ENCODE measurements at regions of chr4 and their contacts with region 1.

Region 1: DNA sequence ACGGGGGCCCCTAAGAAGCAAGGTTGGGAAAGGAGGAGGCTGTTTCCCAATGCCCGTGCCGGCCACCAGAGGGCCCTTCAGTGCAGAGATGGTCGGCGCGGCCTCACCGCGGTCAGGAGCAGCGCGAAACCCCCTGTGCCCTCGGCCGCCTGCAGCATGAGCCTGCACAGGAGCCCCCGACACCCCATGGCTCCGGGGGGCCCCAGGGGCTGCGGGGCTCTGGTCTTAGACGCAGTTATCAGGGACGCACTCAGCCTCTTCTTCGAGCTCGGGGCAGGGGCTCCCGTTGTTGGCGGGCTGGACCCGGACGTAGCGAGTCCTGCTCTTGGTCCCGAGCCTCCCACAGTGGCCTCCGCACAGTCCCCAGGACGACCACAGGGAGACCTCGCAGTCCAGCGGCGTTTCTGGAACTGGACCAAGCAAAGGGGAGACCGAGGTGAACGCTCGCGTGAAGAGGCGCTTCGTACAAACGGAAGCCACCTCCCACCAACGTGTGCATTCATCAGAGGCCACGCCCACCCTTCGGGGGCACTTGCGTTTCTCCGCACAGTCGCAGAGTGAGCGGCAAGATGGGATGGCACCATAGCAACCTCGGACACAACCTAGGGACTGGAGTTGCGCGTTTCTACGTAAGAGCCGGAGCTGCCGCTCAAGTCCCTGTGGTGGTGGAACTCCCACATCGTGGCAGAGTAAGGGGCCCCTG is 5.0 kb downstream of the SPON2 start:
- DNase-seq: peak; percentile 94
- H3K4me3 Mint-ChIP-seq: peak overlapping the region; percentile 76
- H3K27ac Mint-ChIP-seq: peak overlapping the region; percentile 73
- H3K4me1 Mint-ChIP-seq: peaks cover 35% of the 10 kb centered on the region
- H3K27me3 Mint-ChIP-seq: peaks cover 76% of the 10 kb centered on the region

Region 2: DNA sequence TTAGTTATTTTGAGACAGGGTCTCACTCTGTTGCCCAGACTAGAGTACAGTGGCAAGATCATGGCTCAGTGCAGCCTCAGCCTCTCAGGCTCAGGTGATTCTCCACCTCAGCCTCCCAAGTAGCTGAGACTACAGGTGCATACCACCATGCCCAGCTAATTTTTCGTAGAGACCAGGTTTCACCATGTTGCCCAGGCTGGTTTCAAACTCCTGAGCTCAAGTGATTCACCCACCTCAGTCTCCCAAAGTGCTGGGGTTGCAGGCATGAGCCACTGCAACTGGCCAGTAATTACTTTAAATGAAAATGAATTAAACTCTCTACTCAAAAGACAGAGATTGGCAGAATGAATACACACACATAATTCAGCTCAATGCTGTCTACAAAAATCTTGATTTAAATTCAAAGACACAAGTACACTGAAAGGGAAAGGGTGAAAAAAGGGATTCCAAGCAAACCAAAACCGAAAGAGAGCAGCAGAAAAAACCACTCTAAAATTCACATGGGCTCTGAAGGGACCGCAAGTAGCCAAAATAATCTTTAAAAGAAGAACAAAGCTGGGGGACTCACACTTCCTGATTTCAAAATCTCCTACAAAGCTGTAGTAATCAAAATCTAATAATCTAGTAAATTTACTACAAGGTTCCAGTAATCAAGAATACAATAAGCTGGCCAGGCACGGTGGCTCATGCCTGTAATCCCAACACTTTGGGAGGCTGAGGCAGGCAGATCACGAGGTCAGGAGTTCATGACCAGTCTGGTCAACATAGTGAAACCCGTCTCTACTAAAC is 16.8 kb after region 1 on chr4:
- CTCF ChIA-PET with region 1: interaction called, 12 read pairs
- DNase-seq: no peak
- H3K4me3 Mint-ChIP-seq: no peak overlapping the region
- H3K27ac Mint-ChIP-seq: peak overlapping the region; percentile 31
- H3K4me1 Mint-ChIP-seq: peaks cover 45% of the 10 kb centered on the region
- H3K27me3 Mint-ChIP-seq: peaks cover 22% of the 10 kb centered on the region

Region 3: GRCh38 chr4:1201851-1202525 is 34.6 kb after region 1 on chr4:
- CTCF ChIA-PET with region 1: interaction called, 15 read pairs
- DNase-seq: peak; percentile 89
- H3K4me3 Mint-ChIP-seq: peak overlapping the region; percentile 84
- H3K27ac Mint-ChIP-seq: peak overlapping the region; percentile 100
- H3K4me1 Mint-ChIP-seq: peaks cover 54% of the 10 kb centered on the region
- H3K27me3 Mint-ChIP-seq: peaks cover 1% of the 10 kb centered on the region

Region 4: GRCh38 chr4:1216869-1217294 is 49.5 kb after region 1 on chr4:
- CTCF ChIA-PET with region 1: interaction called, 16 read pairs
- DNase-seq: peak; percentile 85
- H3K4me3 Mint-ChIP-seq: peak overlapping the region; percentile 49
- H3K27ac Mint-ChIP-seq: peak overlapping the region; percentile 82
- H3K4me1 Mint-ChIP-seq: peaks cover 37% of the 10 kb centered on the region
- H3K27me3 Mint-ChIP-seq: no peaks in the 10 kb centered on the region

Region 5: DNA sequence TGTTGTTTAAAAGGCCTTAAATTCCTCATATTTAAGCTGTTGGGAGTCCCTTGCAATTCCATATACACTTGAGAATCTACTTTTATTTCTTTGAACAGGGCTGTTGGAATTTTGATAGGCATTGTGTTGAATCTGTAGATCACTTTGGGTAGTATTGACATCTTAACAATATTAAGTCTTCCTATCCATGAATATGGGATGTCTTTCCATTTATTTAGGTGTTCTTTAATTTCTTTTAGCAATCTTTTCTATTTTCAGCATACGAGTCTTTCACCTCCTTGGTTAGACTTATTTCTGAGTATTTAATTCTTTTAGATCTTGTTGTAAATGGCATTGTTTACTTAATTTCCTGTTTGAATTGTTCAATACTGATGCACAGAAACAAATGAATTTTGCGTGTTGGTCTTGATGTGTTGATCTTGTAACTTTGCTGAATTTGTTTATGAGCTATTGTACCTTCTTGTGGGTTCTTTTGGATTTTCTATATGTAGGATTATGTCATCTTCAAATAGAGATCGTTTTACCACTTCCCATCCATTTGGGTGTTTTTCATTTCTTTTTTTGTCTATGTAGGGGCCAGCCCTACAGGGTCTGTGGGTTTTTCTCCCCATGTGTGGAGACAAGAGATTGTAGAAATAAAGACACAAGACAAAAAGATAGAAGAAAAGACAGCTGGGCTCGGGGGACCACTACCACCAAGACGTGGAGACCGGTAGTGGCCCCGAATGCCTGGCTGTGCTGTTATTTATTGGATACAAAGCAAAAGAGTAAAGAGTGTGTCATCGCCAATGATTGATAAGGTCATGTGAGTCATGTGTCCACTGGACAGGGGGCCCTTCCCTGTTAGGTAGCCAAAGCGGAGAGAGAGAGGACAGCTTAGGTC is 99.7 kb after region 1 on chr4:
- CTCF ChIA-PET with region 1: interaction called, 37 read pairs
- DNase-seq: no peak
- H3K4me3 Mint-ChIP-seq: peak overlapping the region; percentile 69
- H3K27ac Mint-ChIP-seq: peak overlapping the region; percentile 99
- H3K4me1 Mint-ChIP-seq: peaks cover 21% of the 10 kb centered on the region
- H3K27me3 Mint-ChIP-seq: no peaks in the 10 kb centered on the region

Region 6: GRCh38 chr4:1289207-1290164 is 122.1 kb after region 1 on chr4 and contains the start of gene MAEA:
- CTCF ChIA-PET with region 1: interaction called, 13 read pairs
- DNase-seq: peak; percentile 98
- H3K4me3 Mint-ChIP-seq: peak within 1 kb of the TSS; percentile 96
- H3K27ac Mint-ChIP-seq: peak within 1 kb of the TSS; percentile 92
- H3K4me1 Mint-ChIP-seq: peaks cover 37% of the 10 kb centered on the region
- H3K27me3 Mint-ChIP-seq: no peaks in the 10 kb centered on the region

Measured in activated naive CD4-positive, alpha-beta T cell treated with anti-CD3 and anti-CD28 coated beads, Interleukin-2, amount 10 ng/mL, durations not matched to agents 7 days and 5 days (primary cell).